Aorta (tissue), 5 donors: ENCODE measurements at regions of chr18 and their contacts with region 1.

Region 1: DNA sequence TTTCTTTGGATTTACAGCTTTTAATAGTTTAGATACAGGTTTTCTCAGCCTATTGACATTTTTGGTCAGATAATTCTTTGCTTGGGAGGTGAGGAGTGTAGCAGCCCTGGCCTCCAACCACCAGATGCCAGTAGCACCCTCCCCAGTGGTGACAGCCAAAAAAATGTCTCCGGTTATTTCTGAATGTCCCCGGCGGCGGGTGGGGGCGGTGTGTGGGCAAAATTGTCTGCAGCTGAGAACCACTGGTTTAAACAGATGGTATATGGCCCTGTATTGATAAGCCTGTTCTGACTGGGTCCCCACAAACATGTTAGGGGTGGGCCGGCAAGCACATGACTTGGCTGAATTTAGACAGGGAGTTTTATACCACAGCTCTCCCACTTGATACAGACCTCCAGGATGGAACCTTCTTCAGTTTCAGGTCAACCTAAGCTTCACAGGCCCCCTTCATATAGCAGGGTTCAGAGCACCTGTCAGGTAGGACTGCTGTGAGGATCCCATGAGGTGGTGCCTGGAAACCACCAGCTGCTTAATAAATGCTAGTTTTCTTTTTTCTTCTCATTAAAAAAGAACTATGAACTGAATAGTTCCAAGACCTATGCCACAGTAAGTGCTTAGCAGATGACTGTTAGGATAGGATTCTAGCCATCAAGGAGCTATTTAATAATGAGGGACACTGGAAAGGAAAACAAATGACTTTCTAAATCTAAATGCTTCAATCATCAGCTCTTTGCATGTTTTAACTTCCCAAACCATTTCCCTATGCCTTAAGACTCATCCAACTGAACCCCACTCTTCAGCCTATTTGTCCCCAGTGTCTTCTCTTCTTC is 18.1 kb downstream of the LPIN2 start:
- DNase-seq: peak; percentile 66 to 86
- ATAC-seq: no peak
- H3K4me3 ChIP-seq: no peak overlapping the region
- H3K27ac ChIP-seq: peak overlapping the region in 1 of 2 donors; percentile 35
- H3K4me1 ChIP-seq: peaks cover 4 to 5% of the 10 kb centered on the region in 2 donors
- H3K27me3 ChIP-seq: no peaks in the 10 kb centered on the region

Region 2: DNA sequence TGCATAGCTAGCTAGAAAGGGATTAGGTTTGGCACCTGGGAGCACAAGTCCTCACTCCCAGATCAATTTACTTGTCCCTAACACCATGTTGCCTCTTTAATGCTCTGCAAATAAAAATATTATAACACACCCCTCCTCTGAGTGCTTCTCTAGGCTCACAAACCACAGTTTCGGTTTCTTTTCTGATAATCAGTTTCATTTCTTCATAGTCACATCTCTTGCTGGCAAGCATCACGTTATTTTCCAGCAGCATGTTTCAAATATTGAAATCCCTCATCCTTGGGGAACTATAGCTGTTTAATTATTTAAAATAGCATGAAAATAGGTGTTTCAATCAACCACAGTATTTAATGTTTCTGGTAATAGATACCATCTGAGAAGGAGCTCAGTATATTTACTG is 353.2 kb before region 1 on chr18:
- intact Hi-C with region 1: no loop called
- DNase-seq: no peak
- ATAC-seq: peak; percentile 47
- H3K4me3 ChIP-seq: no peak overlapping the region
- H3K27ac ChIP-seq: no peak overlapping the region
- H3K4me1 ChIP-seq: no peaks in the 10 kb centered on the region
- H3K27me3 ChIP-seq: no peaks in the 10 kb centered on the region

Region 3: GRCh38 chr18:3062798-3063680 is 68.2 kb after region 1 on chr18:
- intact Hi-C with region 1: loop called (anchors 5 kb)
- DNase-seq: peak; percentile 77 to 89
- ATAC-seq: peak; percentile 71
- H3K4me3 ChIP-seq: no peak overlapping the region
- H3K27ac ChIP-seq: no peak overlapping the region
- H3K4me1 ChIP-seq: no peaks in the 10 kb centered on the region
- H3K27me3 ChIP-seq: no peaks in the 10 kb centered on the region